ENCODE measurements at regions of chr6 and their contacts with region 1.

Region 1: GRCh38 chr6:133553652-133554051 is 312.5 kb downstream of the EYA4 start:
- DNase-seq: peak; percentile 57
- ATAC-seq: no peak
- H3K4me3 Mint-ChIP-seq: no peak overlapping the region
- H3K27ac Mint-ChIP-seq: no peak overlapping the region
- H3K4me1 Mint-ChIP-seq: no peaks in the 10 kb centered on the region
- H3K27me3 Mint-ChIP-seq: peaks cover 7% of the 10 kb centered on the region

Region 2: GRCh38 chr6:132830334-132830751 is 723.3 kb before region 1 on chr6:
- CTCF ChIA-PET with region 1: no interaction called
- POLR2A ChIA-PET with region 1: no interaction called
- intact Hi-C with region 1: loop called in 1 of 2 experiments (anchors 2 kb)
- DNase-seq: peak; percentile 8
- ATAC-seq: no peak
- H3K4me3 Mint-ChIP-seq: no peak overlapping the region
- H3K27ac Mint-ChIP-seq: no peak overlapping the region
- H3K4me1 Mint-ChIP-seq: no peaks in the 10 kb centered on the region
- H3K27me3 Mint-ChIP-seq: peaks cover 2% of the 10 kb centered on the region

Region 3: DNA sequence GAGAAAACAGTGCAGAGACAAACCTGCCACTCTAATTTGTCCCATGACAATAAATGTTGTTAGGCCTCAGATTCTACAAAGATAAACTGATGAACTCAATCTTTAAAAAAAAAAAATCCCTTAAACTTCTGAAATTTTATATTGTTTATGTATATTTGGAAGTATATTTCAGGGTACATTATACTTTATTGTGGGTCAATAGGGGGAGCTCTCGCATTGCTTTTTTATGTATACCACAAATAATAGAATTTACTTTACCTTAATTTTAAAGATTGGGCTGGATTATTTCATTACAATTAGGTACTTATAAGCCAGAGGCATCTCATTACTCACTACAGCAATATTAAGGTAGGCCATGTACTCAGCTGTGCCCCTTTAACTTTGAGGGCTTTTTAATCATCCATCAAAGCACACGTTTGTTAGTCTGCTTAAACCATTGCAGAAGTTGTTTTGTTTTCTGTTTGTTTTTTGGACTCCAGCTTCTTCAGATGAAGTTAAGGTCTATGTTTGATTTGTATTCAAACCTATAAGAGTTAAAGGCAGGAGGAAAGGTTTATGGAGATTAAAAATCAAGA is 368.8 kb before region 1 on chr6:
- CTCF ChIA-PET with region 1: interaction called, 4 read pairs
- POLR2A ChIA-PET with region 1: no interaction called
- intact Hi-C with region 1: loop called in 1 of 2 experiments (anchors 1 kb)
- DNase-seq: no peak
- ATAC-seq: no peak
- H3K4me3 Mint-ChIP-seq: no peak overlapping the region
- H3K27ac Mint-ChIP-seq: no peak overlapping the region
- H3K4me1 Mint-ChIP-seq: no peaks in the 10 kb centered on the region
- H3K27me3 Mint-ChIP-seq: peaks cover 3% of the 10 kb centered on the region

Region 4: DNA sequence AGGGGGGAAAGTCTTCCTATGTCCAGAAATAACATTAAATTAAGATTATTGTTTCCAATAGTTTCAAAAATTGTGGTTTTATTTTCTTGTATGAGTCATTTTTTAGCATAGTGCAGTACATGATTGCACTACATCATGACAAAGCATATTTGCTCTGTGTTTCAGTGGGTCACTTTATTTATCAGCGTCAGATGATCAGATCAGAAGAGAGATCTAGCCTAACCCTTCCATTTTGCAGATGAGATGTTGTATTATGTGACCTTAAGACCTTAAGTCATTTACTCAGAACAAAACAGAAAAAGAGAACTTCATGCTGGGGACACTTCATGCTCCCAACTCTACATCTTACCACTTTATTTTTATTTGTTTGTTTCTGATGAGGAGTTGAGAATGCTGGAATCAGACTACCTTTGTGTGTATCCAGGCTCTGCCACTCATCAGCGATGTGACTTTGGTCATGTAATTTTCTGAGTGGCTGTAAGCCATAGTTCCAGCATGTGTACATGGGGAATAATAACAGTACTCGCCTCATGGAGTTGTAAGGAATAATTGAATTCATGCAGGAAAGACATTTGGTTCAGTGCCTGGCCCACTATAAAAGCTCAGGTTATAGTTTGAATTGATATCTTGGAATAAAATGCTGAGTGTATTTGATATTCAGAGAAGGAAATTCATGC is 299.0 kb before region 1 on chr6:
- CTCF ChIA-PET with region 1: no interaction called
- POLR2A ChIA-PET with region 1: no interaction called
- intact Hi-C with region 1: no loop called
- DNase-seq: no peak
- ATAC-seq: no peak
- H3K4me3 Mint-ChIP-seq: no peak overlapping the region
- H3K27ac Mint-ChIP-seq: no peak overlapping the region
- H3K4me1 Mint-ChIP-seq: no peaks in the 10 kb centered on the region
- H3K27me3 Mint-ChIP-seq: peaks cover 8% of the 10 kb centered on the region

Region 5: GRCh38 chr6:133568970-133569889 is 15.6 kb after region 1 on chr6:
- CTCF ChIA-PET with region 1: interaction called, 11 read pairs
- POLR2A ChIA-PET with region 1: no interaction called
- intact Hi-C with region 1: no loop called
- DNase-seq: peak; percentile 61
- ATAC-seq: peak; percentile 99
- H3K4me3 Mint-ChIP-seq: peak overlapping the region; percentile 40
- H3K27ac Mint-ChIP-seq: no peak overlapping the region
- H3K4me1 Mint-ChIP-seq: peaks cover 7% of the 10 kb centered on the region
- H3K27me3 Mint-ChIP-seq: peaks cover 28% of the 10 kb centered on the region